Activated naive CD4-positive, alpha-beta T cell treated with anti-CD3 and anti-CD28 coated beads for 36 hours (primary cell): ENCODE measurements at regions of chr14 and their contacts with region 1.

Region 1: GRCh38 chr14:37594238-37594914 is 673 bp downstream of the FOXA1 start:
- DNase-seq: peak; percentile 72
- H3K4me3 Mint-ChIP-seq: peak overlapping the region; percentile 53
- H3K27ac Mint-ChIP-seq: peak overlapping the region; percentile 47
- H3K4me1 Mint-ChIP-seq: peaks cover 34% of the 10 kb centered on the region
- H3K27me3 Mint-ChIP-seq: peaks cover 74% of the 10 kb centered on the region

Region 2: GRCh38 chr14:36520601-36521525 is 1073.5 kb before region 1 on chr14:
- CTCF ChIA-PET with region 1: no interaction called
- intact Hi-C with region 1: loop called (anchors 5 kb)
- DNase-seq: no peak
- H3K4me3 Mint-ChIP-seq: no peak overlapping the region
- H3K27ac Mint-ChIP-seq: no peak overlapping the region
- H3K4me1 Mint-ChIP-seq: peaks cover 23% of the 10 kb centered on the region
- H3K27me3 Mint-ChIP-seq: peaks cover 71% of the 10 kb centered on the region

Region 3: GRCh38 chr14:36661756-36662498 is 932.4 kb before region 1 on chr14 and contains the start of gene PAX9:
- CTCF ChIA-PET with region 1: no interaction called
- intact Hi-C with region 1: loop called (anchors 5 kb)
- DNase-seq: peak; percentile 65
- H3K4me3 Mint-ChIP-seq: peak within 1 kb of the TSS; percentile 48
- H3K27ac Mint-ChIP-seq: peak within 1 kb of the TSS; percentile 41
- H3K4me1 Mint-ChIP-seq: peaks cover 43% of the 10 kb centered on the region
- H3K27me3 Mint-ChIP-seq: peaks cover 90% of the 10 kb centered on the region
- total RNA-seq, gene PAX9: not detected

Region 4: GRCh38 chr14:37508500-37508899 is 85.9 kb before region 1 on chr14:
- CTCF ChIA-PET with region 1: no interaction called
- intact Hi-C with region 1: no loop called
- DNase-seq: no peak
- H3K4me3 Mint-ChIP-seq: no peak overlapping the region
- H3K27ac Mint-ChIP-seq: no peak overlapping the region
- H3K4me1 Mint-ChIP-seq: no peaks in the 10 kb centered on the region
- H3K27me3 Mint-ChIP-seq: no peaks in the 10 kb centered on the region

Region 5: DNA sequence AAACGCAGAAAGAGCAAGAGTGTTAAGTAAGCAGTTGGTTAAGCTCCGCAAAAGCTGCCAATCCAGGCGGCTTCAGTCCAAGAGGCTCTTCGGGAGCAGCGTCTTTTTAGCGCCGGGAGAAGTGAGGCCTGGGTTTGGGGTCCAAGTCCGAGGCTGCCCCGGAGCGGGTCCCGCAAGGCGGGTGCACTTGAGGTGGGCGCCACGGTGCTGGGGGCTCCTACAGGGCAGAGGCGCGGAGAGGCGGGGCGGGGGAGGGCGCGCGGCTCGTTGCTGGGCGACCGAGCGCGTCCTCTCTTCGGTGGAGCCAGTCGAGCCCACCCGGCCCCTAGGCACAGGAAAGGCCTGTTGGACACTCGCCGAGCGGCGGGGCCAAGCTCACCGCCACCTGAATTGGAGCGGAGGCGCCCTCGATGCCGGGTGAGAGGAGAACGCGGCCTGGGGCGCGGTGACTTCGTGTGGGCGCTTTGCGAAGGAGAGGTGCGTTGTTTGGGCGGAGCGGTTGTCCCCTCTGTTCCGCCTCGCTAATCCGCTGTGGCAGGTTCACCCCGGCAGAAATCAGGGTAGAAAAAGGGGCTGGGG is 16.7 kb after region 1 on chr14:
- CTCF ChIA-PET with region 1: no interaction called
- intact Hi-C with region 1: no loop called
- DNase-seq: no peak
- H3K4me3 Mint-ChIP-seq: no peak overlapping the region
- H3K27ac Mint-ChIP-seq: no peak overlapping the region
- H3K4me1 Mint-ChIP-seq: no peaks in the 10 kb centered on the region
- H3K27me3 Mint-ChIP-seq: peaks cover 35% of the 10 kb centered on the region

Region 6: GRCh38 chr14:37668646-37669045 is 74.3 kb after region 1 on chr14:
- CTCF ChIA-PET with region 1: no interaction called
- intact Hi-C with region 1: no loop called
- DNase-seq: no peak
- H3K4me3 Mint-ChIP-seq: no peak overlapping the region
- H3K27ac Mint-ChIP-seq: no peak overlapping the region
- H3K4me1 Mint-ChIP-seq: no peaks in the 10 kb centered on the region
- H3K27me3 Mint-ChIP-seq: no peaks in the 10 kb centered on the region

Region 7: GRCh38 chr14:37763266-37763665 is 168.9 kb after region 1 on chr14:
- CTCF ChIA-PET with region 1: no interaction called
- intact Hi-C with region 1: no loop called
- DNase-seq: no peak
- H3K4me3 Mint-ChIP-seq: no peak overlapping the region
- H3K27ac Mint-ChIP-seq: no peak overlapping the region
- H3K4me1 Mint-ChIP-seq: no peaks in the 10 kb centered on the region
- H3K27me3 Mint-ChIP-seq: peaks cover 2% of the 10 kb centered on the region

Region 8: GRCh38 chr14:37874429-37875191 is 280.2 kb after region 1 on chr14:
- CTCF ChIA-PET with region 1: no interaction called
- intact Hi-C with region 1: loop called (anchors 1 kb)
- DNase-seq: peak; percentile 90
- H3K4me3 Mint-ChIP-seq: no peak overlapping the region
- H3K27ac Mint-ChIP-seq: no peak overlapping the region
- H3K4me1 Mint-ChIP-seq: peaks cover 6% of the 10 kb centered on the region
- H3K27me3 Mint-ChIP-seq: no peaks in the 10 kb centered on the region

Region 9: GRCh38 chr14:39025810-39026627 is 1431.6 kb after region 1 on chr14:
- CTCF ChIA-PET with region 1: no interaction called
- intact Hi-C with region 1: loop called (anchors 10 kb)
- DNase-seq: no peak
- H3K4me3 Mint-ChIP-seq: no peak overlapping the region
- H3K27ac Mint-ChIP-seq: no peak overlapping the region
- H3K4me1 Mint-ChIP-seq: no peaks in the 10 kb centered on the region
- H3K27me3 Mint-ChIP-seq: no peaks in the 10 kb centered on the region